ENCODE measurements at regions of chr2 and their contacts with region 1.

Region 1: GRCh38 chr2:62733546-62733945 is 28.0 kb downstream of the EHBP1 start:
- DNase-seq: no peak
- ATAC-seq: no peak
- H3K4me3 ChIP-seq: no peak overlapping the region
- H3K27ac ChIP-seq: no peak overlapping the region
- H3K4me1 ChIP-seq: no peaks in the 10 kb centered on the region
- H3K27me3 ChIP-seq: no peaks in the 10 kb centered on the region
- CTCF ChIP-seq: no peak

Region 2: GRCh38 chr2:62768615-62769014 is 35.1 kb after region 1 on chr2:
- CTCF ChIA-PET with region 1: no interaction called
- POLR2A ChIA-PET with region 1: no interaction called
- intact Hi-C with region 1: loop called (anchors 5 kb)
- DNase-seq: peak; percentile 78
- ATAC-seq: peak; percentile 64
- H3K4me3 ChIP-seq: no peak overlapping the region
- H3K27ac ChIP-seq: peak overlapping the region; percentile 32
- H3K4me1 ChIP-seq: peaks cover 29% of the 10 kb centered on the region
- H3K27me3 ChIP-seq: no peaks in the 10 kb centered on the region
- CTCF ChIP-seq: no peak

Region 3: DNA sequence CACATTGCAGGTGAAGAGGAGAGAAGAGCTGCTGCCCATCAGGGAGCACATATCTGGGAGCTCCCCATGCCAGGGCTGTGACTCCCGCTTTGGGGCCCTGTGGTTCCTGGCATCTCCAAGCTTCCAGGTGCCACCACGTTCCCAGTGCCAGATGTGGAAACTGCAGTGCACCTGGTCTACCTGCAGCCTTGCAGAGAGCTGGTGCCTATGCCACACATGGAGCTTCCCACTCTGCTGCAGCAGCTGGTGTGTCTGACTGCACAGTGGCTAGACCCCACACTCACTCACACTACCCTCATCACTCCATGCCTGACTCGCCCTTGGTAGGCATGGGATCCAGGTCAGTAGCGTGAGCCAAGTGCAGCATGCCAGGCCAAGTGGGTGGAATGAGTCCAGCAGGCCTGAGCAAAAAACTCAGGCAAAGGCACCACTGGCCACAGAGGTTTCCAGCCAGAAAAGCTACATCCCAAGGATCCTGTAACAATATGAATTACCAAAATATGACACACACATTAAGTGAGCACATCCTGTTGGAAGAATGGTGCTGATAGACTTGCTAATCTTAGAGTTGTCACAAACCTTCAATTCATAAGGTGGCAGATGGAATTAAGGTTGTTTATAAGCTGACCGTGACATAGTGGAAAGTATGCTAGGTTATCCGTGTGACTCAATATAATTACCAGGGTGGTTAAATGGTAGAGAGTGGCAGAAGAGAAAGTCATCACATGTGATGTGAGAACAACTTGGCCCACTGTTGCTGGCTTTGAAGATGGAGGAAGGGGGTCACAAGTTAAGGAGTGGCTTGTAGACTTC is 122.9 kb after region 1 on chr2:
- CTCF ChIA-PET with region 1: no interaction called
- POLR2A ChIA-PET with region 1: no interaction called
- intact Hi-C with region 1: no loop called
- DNase-seq: no peak
- ATAC-seq: peak; percentile 60
- H3K4me3 ChIP-seq: no peak overlapping the region
- H3K27ac ChIP-seq: peak overlapping the region; percentile 29
- H3K4me1 ChIP-seq: peaks cover 16% of the 10 kb centered on the region
- H3K27me3 ChIP-seq: no peaks in the 10 kb centered on the region
- CTCF ChIP-seq: no peak